CD4-positive, alpha-beta memory T cell (primary cell): ENCODE measurements at regions of chr20 and their contacts with region 1.

Region 1: GRCh38 chr20:21505161-21505809 is 8.6 kb downstream of the NKX2-2 start:
- DNase-seq: peak; percentile 66 to 77 (median 70)
- H3K4me3 ChIP-seq: peak overlapping the region in 1 of 2 donors; percentile 55
- H3K4me3 Mint-ChIP-seq: peak overlapping the region; percentile 71 to 80 (median 74)
- H3K27ac ChIP-seq: no peak overlapping the region
- H3K27ac Mint-ChIP-seq: peak overlapping the region in 2 of 7 donors; percentile 41 to 81
- H3K4me1 ChIP-seq: peaks cover 22% of the 10 kb centered on the region
- H3K4me1 Mint-ChIP-seq: peaks cover 15 to 43% (median 35%) of the 10 kb centered on the region in 4 donors
- H3K27me3 ChIP-seq: peaks cover 39% of the 10 kb centered on the region
- H3K27me3 Mint-ChIP-seq: peaks cover 44 to 52% of the 10 kb centered on the region in 2 donors

Region 2: DNA sequence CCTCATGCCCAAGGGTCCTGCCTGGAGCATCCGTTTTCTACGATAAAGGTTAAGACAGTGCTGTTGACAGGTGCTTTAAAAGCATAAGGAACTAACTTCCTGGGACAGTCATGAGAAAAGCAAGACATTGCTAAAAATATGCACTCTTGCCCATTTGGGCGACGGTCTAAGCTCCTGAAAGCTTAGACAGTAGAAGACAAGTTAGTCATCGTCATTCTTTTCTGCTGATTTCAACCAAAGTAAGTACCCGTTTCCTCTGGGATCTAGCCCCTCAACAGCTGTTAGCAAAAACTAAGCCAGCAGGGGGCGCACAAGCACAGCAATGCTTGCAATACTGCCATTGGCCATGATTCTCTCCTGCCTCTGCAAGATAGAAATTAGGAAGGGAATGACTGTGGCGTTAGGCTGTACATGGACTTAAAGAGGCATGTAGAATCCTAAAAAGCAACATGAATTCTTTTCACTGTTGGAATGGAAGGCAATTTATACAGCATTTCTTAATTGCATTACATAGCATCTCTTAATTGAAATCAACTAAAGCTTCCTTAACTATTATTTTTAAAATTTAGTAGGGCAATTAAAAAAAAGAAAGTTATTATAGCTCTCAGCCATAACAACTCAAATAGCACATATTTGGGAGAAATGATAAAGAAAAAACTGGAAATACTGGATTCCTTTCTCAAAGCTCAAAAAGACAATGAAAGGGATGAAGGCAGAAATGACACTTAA is 645.0 kb before region 1 on chr20:
- CTCF ChIA-PET with region 1: interaction called, 147 read pairs
- POLR2A ChIA-PET with region 1: no interaction called
- intact Hi-C with region 1: no loop called
- DNase-seq: peak; percentile 60 to 71 (median 66)
- H3K4me3 ChIP-seq: no peak overlapping the region
- H3K4me3 Mint-ChIP-seq: no peak overlapping the region
- H3K27ac ChIP-seq: no peak overlapping the region
- H3K27ac Mint-ChIP-seq: no peak overlapping the region
- H3K4me1 ChIP-seq: no peaks in the 10 kb centered on the region
- H3K4me1 Mint-ChIP-seq: peaks cover 0 to 2% (median 0%) of the 10 kb centered on the region in 4 donors
- H3K27me3 ChIP-seq: no peaks in the 10 kb centered on the region
- H3K27me3 Mint-ChIP-seq: peaks cover 16 to 18% of the 10 kb centered on the region in 2 donors

Region 3: GRCh38 chr20:21125849-21126580 is 379.3 kb before region 1 on chr20 and contains the start of gene KIZ:
- CTCF ChIA-PET with region 1: interaction called, 4 read pairs
- POLR2A ChIA-PET with region 1: no interaction called
- intact Hi-C with region 1: loop called (anchors 5 kb)
- DNase-seq: peak; percentile 92 to 99 (median 97)
- H3K4me3 ChIP-seq: peak within 1 kb of the TSS; percentile 78 to 81
- H3K4me3 Mint-ChIP-seq: peak within 1 kb of the TSS; percentile 84 to 99 (median 93)
- H3K27ac ChIP-seq: peak within 1 kb of the TSS; percentile 68
- H3K27ac Mint-ChIP-seq: peak within 1 kb of the TSS; percentile 55 to 98 (median 93)
- H3K4me1 ChIP-seq: peaks cover 21% of the 10 kb centered on the region
- H3K4me1 Mint-ChIP-seq: peaks cover 11 to 28% (median 20%) of the 10 kb centered on the region in 4 donors
- H3K27me3 ChIP-seq: no peaks in the 10 kb centered on the region
- H3K27me3 Mint-ChIP-seq: peaks cover 0 to 2% of the 10 kb centered on the region in 2 donors
- total RNA-seq, gene KIZ: 33.7 to 46.3 TPM

Region 4: DNA sequence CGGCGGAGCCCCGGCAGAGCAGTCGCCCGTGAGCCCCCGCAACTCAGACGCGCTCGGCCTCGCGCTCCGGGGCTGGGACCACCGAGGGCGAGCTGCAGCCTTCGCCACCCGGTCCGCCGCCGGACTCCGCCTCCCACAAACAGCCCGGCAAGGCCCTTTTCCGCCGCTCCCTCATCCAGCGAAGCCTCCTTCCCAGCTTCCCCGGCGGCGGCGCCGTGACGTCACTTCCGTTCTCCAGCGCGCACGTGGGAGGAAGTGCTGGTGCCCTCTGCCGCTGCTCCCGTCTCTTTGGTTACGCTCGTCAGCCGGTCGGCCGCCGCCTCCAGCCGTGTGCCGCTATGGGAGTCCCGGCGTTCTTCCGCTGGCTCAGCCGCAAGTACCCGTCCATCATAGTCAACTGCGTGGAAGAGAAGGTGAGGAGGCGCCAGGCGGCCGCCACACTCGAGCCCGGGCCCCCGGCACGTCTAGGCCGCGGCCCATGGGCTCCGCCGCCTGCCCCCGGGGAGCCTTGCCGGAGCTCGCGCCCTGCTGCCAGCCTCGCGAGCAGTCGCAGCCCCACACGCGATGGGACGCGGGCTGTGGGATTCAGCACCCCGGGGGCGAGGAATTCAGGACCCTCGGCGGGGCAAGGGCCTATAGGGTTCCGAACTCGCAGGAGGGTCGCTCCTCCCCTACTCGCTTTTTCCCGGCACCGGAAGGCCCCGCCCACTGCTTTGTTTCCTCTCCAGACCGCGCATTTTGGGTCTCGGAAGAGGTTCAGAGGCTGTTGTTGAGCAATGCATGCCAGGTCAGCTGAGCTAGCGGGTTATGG is 202.0 kb before region 1 on chr20 and contains the start of gene XRN2:
- CTCF ChIA-PET with region 1: interaction called, 4 read pairs
- POLR2A ChIA-PET with region 1: no interaction called
- intact Hi-C with region 1: loop called (anchors 1 kb)
- DNase-seq: peak; percentile 92 to 94 (median 92)
- H3K4me3 ChIP-seq: peak within 1 kb of the TSS; percentile 89 to 91
- H3K4me3 Mint-ChIP-seq: peak within 1 kb of the TSS; percentile 91 to 98 (median 97)
- H3K27ac ChIP-seq: peak within 1 kb of the TSS; percentile 91
- H3K27ac Mint-ChIP-seq: peak within 1 kb of the TSS; percentile 98 to 99 (median 99)
- H3K4me1 ChIP-seq: peaks cover 18% of the 10 kb centered on the region
- H3K4me1 Mint-ChIP-seq: peaks cover 23 to 41% (median 28%) of the 10 kb centered on the region in 4 donors
- H3K27me3 ChIP-seq: no peaks in the 10 kb centered on the region
- H3K27me3 Mint-ChIP-seq: peaks cover 0 to 3% of the 10 kb centered on the region in 2 donors
- total RNA-seq, gene XRN2: 52.8 to 56.3 TPM

Region 5: DNA sequence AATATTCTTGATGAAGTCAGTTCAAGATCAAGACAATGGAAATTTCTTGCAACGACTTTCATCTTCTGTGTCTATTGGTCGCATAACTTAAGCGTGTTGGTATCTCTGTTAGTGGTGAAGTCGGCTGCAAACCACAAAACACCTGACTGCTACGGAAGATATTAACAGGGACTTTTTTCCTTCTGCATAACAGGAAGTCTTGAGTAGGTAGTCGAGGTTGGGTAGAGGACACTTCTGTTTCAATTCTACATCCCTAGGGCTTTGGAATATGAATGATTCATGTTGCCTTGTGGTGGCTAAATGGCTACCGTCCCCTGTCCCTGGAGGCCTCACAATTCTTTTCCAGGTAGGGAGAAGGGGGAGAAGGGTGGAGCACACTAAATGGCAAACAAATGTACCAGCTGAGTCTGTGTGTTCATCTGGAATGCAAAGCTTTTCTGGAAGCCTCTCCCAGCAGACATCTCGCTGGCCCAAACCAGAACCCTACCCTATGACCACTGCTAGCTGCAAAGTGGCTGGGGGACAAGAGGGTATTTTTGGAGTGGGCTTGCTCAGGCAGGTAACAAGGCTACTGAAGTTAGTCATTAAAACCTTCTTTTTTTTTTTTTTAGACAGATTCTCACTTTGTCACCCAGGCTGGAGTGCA is 43.2 kb after region 1 on chr20:
- CTCF ChIA-PET with region 1: interaction called, 6 read pairs
- POLR2A ChIA-PET with region 1: no interaction called
- intact Hi-C with region 1: loop called (anchors 1 kb)
- DNase-seq: peak; percentile 74 to 86 (median 80)
- H3K4me3 ChIP-seq: peak overlapping the region; percentile 10 to 32
- H3K4me3 Mint-ChIP-seq: peak overlapping the region; percentile 74 to 88 (median 80)
- H3K27ac ChIP-seq: peak overlapping the region; percentile 43
- H3K27ac Mint-ChIP-seq: peak overlapping the region; percentile 84 to 97 (median 95)
- H3K4me1 ChIP-seq: peaks cover 44% of the 10 kb centered on the region
- H3K4me1 Mint-ChIP-seq: peaks cover 22 to 41% (median 32%) of the 10 kb centered on the region in 4 donors
- H3K27me3 ChIP-seq: no peaks in the 10 kb centered on the region
- H3K27me3 Mint-ChIP-seq: no peaks in the 10 kb centered on the region